Psoas muscle (tissue), 8 donors: ENCODE measurements at regions of chr3 and their contacts with region 1.

Region 1: GRCh38 chr3:154252759-154253638 is 71.3 kb downstream of the DHX36 start:
- DNase-seq: peak; percentile 87 to 89
- ATAC-seq: peak; percentile 51 to 80 (median 73)
- H3K4me3 ChIP-seq: no peak overlapping the region
- H3K27ac ChIP-seq: no peak overlapping the region
- H3K4me1 ChIP-seq: no peaks in the 10 kb centered on the region
- H3K27me3 ChIP-seq: no peaks in the 10 kb centered on the region
- CTCF ChIP-seq: peak; percentile 73

Region 2: DNA sequence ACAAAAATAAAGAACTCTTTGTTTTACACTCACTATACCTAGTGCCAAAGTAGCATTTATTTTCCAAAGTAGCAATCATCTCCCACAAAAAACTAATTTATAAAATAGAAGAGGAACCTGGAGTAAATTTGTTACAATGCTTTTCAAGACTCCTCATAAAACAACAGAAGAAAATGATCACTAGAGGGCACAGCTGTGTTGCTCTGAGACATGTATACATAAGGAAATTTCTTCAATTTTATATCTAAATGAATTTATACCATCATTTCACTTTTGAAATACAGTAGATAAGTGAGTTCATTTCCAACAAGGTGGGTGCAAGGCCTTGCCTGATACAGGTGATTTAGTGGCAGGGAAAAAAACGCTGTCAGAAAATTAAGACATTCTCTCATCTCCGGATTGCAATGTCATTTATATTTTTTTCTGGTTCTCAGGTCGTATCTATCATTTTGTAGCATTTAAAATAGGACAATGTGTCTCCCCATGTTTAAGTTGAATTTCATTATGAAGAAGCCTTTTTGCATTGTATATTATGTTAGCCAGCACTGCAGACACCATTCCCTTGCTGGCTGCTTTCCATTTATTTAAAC is 157.1 kb before region 1 on chr3:
- intact Hi-C with region 1: loop called in 1 of 2 experiments (anchors 5 kb)
- DNase-seq: no peak
- ATAC-seq: no peak
- H3K4me3 ChIP-seq: no peak overlapping the region
- H3K27ac ChIP-seq: no peak overlapping the region
- H3K4me1 ChIP-seq: no peaks in the 10 kb centered on the region
- H3K27me3 ChIP-seq: no peaks in the 10 kb centered on the region
- CTCF ChIP-seq: peak; percentile 33

Region 3: GRCh38 chr3:154120961-154121700 is 131.9 kb before region 1 on chr3 and contains the start of gene ARHGEF26:
- intact Hi-C with region 1: loop called in 1 of 2 experiments (anchors 5 kb)
- DNase-seq: peak; percentile 84 to 86
- ATAC-seq: peak; percentile 80 to 93 (median 84)
- H3K4me3 ChIP-seq: peak within 1 kb of the TSS; percentile 80
- H3K27ac ChIP-seq: no peak within 1 kb of the TSS
- H3K4me1 ChIP-seq: no peaks in the 10 kb centered on the region
- H3K27me3 ChIP-seq: peaks cover 0 to 37% (median 8%) of the 10 kb centered on the region in 3 donors
- CTCF ChIP-seq: no peak
- total RNA-seq, gene ARHGEF26: 0.37 to 1.8 (median 0.57) TPM

Region 4: DNA sequence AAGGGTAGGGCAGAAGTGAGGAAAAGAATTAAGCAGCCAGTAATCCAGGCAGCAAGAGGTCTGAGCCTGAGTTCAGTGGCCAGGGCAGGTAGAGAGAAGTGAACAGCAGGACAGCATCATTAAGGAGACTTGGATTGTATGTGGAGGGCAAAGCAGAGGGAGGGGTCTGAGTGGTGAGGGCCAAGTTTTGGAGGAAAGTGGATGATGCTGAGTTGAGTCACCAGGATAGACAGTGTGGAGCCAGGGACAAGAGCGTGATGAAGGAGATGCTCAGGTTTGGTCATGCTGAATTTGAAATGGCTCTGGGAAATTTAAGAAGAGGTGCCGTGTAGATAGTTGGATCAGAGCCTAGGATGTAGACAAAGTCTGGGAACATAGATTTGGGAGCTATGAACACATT is 38.7 kb before region 1 on chr3:
- intact Hi-C with region 1: no loop called
- DNase-seq: no peak
- ATAC-seq: no peak
- H3K4me3 ChIP-seq: no peak overlapping the region
- H3K27ac ChIP-seq: no peak overlapping the region
- H3K4me1 ChIP-seq: no peaks in the 10 kb centered on the region
- H3K27me3 ChIP-seq: no peaks in the 10 kb centered on the region
- CTCF ChIP-seq: no peak

Region 5: GRCh38 chr3:154356009-154356408 is 103.0 kb after region 1 on chr3:
- intact Hi-C with region 1: no loop called
- DNase-seq: no peak
- ATAC-seq: no peak
- H3K4me3 ChIP-seq: no peak overlapping the region
- H3K27ac ChIP-seq: no peak overlapping the region
- H3K4me1 ChIP-seq: no peaks in the 10 kb centered on the region
- H3K27me3 ChIP-seq: peaks cover 0 to 4% (median 0%) of the 10 kb centered on the region in 3 donors
- CTCF ChIP-seq: no peak